HEK293T (cell line): ENCODE measurements at regions of chr1 and their contacts with region 1.

Region 1: GRCh38 chr1:21232044-21232443 is 55.3 kb upstream of the EIF4G3 start:
- DNase-seq: peak; percentile 76

Region 2: DNA sequence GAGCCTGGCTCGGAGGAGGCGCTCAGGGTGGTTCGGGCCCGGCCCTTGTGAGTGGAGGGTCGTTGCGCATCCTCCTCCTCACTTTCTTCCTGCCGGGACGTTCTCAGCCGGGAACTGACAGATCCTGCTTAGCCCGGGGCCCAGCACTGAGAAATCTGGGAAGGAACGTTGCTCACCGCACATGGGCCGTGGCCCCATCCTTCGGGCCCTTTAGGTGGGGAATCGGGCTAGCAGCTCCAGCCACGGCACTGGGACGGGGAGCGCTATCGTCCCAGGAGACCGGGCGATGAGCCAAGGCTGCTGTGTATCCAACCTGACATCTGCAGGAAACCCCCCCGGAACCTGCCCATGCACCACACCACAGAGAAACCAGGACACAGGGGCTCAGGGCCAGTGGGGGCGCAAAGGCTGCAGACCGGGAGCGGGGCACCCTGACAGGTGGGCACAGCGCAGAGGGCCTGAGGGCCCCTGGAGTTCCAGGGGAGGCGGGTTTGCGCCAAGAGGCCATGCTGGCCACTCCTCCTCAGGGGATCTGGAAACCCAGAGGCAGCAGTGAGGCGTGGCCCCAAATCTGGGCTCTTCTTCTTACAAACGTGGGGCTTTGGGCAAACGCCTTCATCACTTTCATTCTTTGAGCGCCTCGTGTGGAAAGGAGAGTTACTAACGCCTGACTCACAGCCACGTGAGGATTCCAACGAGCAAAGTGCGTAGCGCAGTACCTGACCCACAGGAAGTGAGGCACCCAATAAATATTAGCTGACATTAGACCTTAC is 499.3 kb before region 1 on chr1 and contains the start of gene SH2D5:
- CTCF ChIA-PET with region 1: no interaction called
- POLR2A ChIA-PET with region 1: no interaction called
- DNase-seq: peak; percentile 53

Region 3: GRCh38 chr1:21115098-21115760 is 116.8 kb before region 1 on chr1:
- CTCF ChIA-PET with region 1: no interaction called
- POLR2A ChIA-PET with region 1: no interaction called
- DNase-seq: no peak

Region 4: DNA sequence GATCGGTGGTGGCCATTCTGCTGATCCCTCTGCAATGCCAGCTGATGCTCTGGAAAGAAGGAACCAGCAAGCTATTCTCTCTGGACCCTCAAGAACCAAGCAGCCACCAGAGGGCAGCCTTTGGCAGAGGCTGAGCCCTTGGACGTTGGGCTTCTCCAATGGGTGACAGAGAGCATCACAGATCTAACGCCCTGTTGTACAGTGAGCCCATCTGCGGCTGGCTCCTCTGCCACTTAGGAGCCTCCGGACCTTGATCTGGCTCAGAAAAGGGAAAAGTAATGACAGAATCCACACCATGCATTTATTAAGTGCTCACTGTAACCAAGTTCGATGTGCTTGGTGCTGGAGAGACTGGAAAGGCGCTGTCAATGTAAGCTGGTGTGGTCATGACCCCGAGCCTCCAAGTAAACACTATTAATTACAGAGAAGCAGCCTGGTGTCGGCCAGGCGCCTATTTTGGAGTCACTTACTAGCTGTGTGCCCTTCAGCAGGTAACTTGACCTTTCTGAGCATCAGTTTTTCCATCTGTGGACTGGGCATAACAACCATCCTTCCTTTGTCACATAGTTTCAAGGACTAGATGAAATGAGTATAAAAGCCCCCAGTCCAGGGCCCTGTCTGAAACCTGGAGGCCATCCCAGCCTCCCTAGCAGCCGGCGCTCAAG is 23.4 kb after region 1 on chr1:
- CTCF ChIA-PET with region 1: interaction called, 10 read pairs
- POLR2A ChIA-PET with region 1: interaction called, 3 read pairs
- DNase-seq: peak; percentile 82